ENCODE measurements at regions of chr4 and their contacts with region 1.

Region 1: DNA sequence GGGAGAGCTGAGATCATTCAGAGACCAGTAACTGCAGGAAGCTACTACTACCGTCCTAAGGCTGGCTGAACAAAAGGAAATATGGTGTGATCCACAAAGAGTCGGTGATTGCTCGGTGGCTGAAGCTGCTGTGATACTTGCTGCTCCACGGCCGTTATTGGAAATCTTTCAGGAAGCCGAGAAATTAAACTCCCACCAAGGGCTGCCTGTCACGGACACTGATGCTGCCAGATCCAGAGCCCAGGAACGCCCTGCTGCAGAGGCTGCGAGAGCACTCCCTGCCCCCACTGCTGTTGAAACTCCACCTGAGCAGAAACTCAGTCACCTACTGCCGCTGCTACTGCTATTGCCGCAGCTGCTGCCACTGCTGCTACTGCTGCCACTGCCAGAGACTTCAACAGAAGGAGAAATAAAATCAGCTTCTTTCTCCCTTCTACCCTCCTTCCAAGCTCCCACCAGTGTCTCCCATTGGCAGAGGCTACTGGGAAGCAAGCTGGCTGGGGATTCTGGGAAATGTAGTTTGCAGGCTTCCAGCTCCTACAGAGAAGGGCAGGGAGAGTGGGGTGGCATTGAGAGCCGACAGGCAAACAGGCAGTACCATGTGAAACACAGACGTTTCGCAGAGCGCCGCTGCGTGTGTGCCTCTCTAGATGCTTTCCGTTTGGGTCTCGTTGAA is 126.0 kb upstream of the ENPP6 start:
- DNase-seq: peak; percentile 85
- ATAC-seq: peak; percentile 78

Region 2: GRCh38 chr4:183636923-183637322 is 706.7 kb before region 1 on chr4:
- intact Hi-C with region 1: no loop called
- DNase-seq: no peak
- ATAC-seq: no peak

Region 3: DNA sequence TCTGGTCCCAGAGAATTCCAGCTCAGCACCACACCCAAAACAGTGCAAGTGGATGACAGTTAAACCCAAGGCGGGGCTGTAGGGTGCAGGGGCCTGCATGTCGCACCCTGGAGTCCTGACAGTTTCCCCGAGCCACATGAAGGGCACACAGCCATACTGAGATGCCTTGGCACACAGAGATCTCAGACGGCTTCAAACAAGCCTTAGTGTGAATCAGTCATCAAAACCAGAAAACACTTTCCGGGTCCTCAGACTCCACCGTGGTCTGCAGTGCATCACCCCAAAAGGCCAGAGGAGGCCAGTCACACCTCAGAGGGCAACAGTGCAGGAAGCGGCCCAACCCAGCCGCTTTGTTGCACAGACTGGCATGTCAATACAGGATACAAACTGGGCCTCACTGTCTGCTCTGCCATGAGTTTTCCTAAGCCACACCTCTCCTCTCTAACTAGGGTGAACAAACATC is 61.4 kb before region 1 on chr4:
- intact Hi-C with region 1: loop called (anchors 5 kb)
- DNase-seq: peak; percentile 55
- ATAC-seq: no peak

Region 4: GRCh38 chr4:184384056-184384809 is 40.6 kb after region 1 on chr4:
- intact Hi-C with region 1: loop called (anchors 2 kb)
- DNase-seq: peak; percentile 60
- ATAC-seq: peak; percentile 58